ENCODE measurements at regions of chr10 and their contacts with region 1.

Region 1: DNA sequence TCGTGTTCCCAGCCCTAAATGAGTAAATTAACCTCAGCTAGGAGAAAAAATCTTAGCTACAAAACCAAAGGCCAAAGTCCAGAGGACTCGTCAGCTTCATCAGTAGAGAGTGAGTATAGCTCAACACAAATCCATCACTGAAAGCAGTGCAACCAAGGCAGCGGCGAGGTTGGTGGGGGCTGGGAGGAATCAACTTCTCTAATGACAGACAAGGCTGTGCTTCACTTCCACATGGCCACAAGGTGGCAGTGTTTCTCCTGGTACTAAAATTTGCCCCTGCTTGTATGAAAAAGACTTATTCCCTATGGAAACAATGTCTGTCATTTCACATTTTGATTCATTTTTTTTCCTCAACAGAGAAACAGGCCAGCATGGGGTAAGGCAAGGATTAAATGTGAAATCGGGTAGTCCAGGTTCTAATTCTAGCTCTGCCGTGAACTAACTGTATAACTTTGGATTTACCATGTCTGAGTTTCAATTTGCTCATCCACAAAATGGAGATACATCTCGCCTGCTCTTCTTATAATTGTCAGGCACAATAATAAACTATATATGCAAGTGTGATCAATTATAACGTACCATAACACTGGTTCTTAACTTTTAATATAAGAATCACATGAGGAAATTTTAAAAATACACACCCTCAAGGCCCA is 39.3 kb downstream of the FAS start:
- DNase-seq: peak; percentile 74 to 78
- H3K4me3 ChIP-seq: no peak overlapping the region
- H3K27ac ChIP-seq: peak overlapping the region in 1 of 2 donors; percentile 1
- H3K4me1 ChIP-seq: no peaks in the 10 kb centered on the region
- H3K27me3 ChIP-seq: no peaks in the 10 kb centered on the region
- CTCF ChIP-seq: peak; percentile 83 to 87 (median 86)
- POLR2A ChIP-seq: no peak

Region 2: GRCh38 chr10:89213191-89213808 is 183.4 kb after region 1 on chr10:
- intact Hi-C with region 1: loop called (anchors 5 kb)
- DNase-seq: no peak
- H3K4me3 ChIP-seq: no peak overlapping the region
- H3K27ac ChIP-seq: no peak overlapping the region
- H3K4me1 ChIP-seq: no peaks in the 10 kb centered on the region
- H3K27me3 ChIP-seq: no peaks in the 10 kb centered on the region
- CTCF ChIP-seq: peak; percentile 68 to 79 (median 74)
- POLR2A ChIP-seq: no peak

Region 3: DNA sequence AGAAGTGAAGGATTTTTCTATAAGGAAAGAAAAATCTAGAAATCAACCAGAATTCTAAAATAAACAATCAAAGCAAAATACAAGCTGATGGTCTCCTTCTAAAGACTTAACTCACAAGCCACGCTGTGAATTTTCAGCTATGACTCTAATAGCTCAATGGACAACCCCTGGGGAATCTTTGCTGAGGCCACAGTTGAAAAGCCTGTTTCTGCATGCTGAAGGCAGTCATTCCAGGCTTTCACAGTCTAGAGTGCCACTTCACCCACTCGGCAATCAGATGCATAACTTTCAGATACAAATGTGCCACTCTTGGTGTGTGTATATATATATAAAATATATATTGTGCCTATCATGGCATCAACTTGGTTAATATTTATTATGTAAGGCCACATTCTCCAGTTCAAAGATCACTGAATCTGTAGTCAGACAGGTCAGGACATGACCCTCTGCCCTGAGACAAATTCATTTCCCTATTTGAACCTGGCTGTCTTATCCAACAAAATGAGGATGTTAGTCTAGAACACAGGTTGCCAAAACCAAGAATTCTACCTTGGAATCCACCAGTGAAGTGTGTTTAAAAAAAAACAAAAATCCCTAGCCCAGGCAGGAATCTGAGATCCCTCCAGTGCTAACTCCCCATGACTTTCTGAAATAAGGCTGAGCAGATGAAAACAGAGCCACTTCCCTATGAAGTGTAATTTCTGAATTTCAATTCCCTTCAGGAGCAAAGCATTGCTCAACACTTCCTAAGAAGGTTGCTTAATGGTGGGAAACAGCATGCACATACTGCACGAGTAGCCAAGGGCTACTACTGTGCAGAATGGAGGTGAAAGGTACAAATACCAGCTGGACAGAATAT is 211.8 kb after region 1 on chr10:
- intact Hi-C with region 1: no loop called
- DNase-seq: no peak
- H3K4me3 ChIP-seq: no peak overlapping the region
- H3K27ac ChIP-seq: no peak overlapping the region
- H3K4me1 ChIP-seq: no peaks in the 10 kb centered on the region
- H3K27me3 ChIP-seq: no peaks in the 10 kb centered on the region
- CTCF ChIP-seq: no peak
- POLR2A ChIP-seq: no peak